ENCODE measurements at regions of chr2 and their contacts with region 1.

Region 1: GRCh38 chr2:175690113-175690837 is 311.8 kb downstream of the LNPK start:
- DNase-seq: peak; percentile 18
- H3K27ac ChIP-seq: no peak overlapping the region
- CTCF ChIP-seq: peak; percentile 73

Region 2: GRCh38 chr2:176088048-176088936 is 398.0 kb after region 1 on chr2:
- CTCF ChIA-PET with region 1: interaction called, 11 read pairs
- POLR2A ChIA-PET with region 1: no interaction called
- DNase-seq: peak; percentile 53
- H3K27ac ChIP-seq: no peak overlapping the region
- CTCF ChIP-seq: peak; percentile 95

Region 3: DNA sequence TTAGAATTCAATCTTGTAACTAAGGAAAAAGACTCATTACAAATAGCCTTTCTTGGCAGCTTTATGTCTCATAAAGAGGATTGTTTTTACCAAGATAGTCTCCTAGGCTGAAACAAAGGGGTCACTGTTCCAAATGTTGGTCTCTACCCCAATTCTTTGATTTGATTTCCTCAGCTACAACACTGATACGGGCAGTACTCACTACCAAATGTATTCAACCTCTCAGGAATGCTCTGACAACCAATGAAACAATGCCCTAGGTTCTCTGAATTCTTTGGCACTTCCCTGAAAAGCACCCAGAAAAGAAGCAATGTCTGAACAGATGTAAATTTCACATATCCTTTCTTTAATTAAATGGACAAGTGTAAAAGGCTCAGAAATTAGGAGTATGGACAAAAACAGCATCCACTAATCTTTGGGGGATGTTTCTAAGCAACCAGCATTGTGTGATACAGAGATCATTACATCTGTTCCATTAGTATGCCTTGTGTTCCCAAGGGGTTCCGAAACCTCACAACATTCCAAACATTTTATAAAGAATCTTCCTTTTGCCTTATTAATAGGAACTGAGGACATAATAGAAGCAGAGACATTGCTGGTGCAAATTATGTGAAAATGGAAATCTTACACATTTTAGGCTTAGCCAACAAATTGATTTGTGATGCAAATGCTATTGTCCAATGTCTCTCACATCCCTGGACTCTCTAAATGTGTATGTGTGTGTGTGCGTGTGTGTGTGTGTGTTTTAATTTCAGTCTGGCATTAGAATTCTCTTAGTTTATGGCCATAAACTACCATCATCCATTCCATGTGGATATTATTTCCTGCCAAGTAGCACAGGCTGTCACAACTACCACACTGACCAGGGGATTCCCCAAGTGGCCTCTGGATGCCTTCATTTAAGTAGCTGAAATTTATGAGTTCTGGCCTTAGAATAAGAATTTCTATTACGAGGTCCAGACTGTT is 855.0 kb after region 1 on chr2:
- CTCF ChIA-PET with region 1: no interaction called
- POLR2A ChIA-PET with region 1: no interaction called
- DNase-seq: no peak
- H3K27ac ChIP-seq: no peak overlapping the region
- CTCF ChIP-seq: no peak

Measured in RWPE1 (cell line).